ENCODE measurements at regions of chr1 and their contacts with region 1.

Region 1: DNA sequence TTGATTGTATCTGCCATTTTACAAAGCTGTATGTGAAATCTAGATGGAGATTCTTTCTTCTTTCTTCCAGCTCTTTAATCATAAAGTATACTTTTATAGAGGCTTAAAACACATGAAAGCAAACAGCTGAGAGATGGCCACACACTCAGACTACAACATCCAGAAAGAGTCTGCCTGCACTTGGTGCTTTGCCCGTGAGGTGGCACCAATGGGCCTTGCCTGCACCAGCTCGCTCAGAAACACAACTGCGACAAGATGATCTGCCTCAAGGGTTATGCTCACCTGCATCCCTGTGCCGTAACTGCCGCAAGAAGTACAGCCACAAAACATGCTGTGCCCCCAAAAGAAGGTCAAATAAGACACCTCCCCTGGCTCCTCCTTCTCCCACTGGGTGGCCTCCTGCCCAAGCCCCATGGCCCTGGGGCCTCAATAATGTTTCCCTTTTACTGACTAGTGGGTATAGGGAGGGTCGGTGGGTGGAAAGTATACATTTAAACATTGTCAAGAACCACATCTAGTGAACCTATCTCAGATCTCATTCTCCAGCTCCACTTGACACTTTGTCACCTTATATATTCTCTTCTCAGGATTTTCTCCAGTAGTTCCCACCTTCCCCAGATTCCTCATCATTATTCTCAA is 66.7 kb upstream of the ANGPTL3 start:
- DNase-seq: peak; percentile 79
- ATAC-seq: peak; percentile 99
- H3K4me3 Mint-ChIP-seq: no peak overlapping the region
- H3K27ac Mint-ChIP-seq: no peak overlapping the region
- H3K4me1 Mint-ChIP-seq: peaks cover 16% of the 10 kb centered on the region
- H3K27me3 Mint-ChIP-seq: no peaks in the 10 kb centered on the region
- CTCF ChIP-seq: peak; percentile 69

Region 2: DNA sequence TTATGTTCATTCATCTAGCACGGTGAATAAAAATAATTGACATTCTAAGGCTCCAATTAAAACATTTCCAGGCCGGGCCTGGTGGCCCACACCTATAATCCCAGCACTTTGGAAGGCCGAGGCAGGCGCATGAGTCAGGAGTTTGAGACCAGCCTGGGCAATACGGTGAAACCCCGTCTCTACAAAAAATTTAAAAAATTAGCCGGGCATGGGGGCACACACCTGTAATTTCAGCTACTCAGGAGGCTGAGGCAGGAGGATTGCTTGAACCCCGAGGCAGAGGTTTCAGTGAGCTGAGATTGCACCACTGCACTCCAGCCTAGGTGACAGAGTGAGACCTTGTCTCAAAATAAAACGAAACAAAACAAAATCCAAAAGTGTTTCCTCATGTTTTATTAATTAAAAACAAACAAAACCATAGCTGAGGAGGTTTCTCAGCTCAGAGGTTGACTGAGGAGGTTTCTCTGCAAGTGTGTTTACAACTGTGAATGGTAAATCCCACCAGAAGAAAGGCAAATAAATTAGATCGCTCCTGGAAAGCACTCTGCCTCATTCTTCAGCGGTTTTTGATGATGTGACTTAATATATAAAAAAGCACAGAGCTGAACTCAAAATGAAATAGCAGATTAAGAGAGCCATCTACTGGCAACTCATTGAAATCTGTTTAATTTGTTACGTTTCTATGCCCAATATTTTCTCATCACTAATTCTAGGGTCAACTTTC is 215.6 kb after region 1 on chr1:
- CTCF ChIA-PET with region 1: interaction called, 22 read pairs
- POLR2A ChIA-PET with region 1: no interaction called
- DNase-seq: no peak
- ATAC-seq: peak; percentile 28; the same call in 1 of the 2 replicates
- H3K4me3 Mint-ChIP-seq: no peak overlapping the region
- H3K27ac Mint-ChIP-seq: no peak overlapping the region
- H3K4me1 Mint-ChIP-seq: peaks cover 12% of the 10 kb centered on the region
- H3K27me3 Mint-ChIP-seq: no peaks in the 10 kb centered on the region
- CTCF ChIP-seq: no peak

Region 3: DNA sequence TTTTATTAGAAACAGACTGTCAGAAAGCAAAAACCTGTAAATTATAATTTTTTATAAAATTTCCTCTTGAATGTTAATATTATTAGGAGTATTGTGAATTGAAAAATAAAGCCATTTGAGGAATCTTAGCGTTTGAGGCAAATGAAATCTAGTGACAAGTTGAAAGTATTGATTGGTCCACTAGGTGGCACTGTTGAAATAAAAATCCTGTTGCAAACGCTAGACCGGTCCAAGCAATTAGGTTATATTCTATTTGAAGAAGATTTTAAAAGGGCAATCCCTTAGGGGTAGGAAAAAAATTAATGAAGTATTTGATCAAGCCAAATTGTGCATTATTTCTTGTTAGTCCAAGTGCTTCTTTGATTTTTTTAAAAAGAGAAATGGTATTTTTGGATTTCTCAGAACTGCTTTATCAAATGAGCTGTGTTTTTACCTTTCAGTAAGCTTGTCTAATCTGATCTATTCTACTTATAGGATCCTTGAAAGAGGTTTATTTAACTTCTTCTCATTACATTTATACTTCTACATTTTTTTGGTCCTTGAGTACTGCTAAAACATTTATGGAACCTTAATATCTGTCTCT is 311.0 kb after region 1 on chr1:
- CTCF ChIA-PET with region 1: interaction called, 10 read pairs
- POLR2A ChIA-PET with region 1: no interaction called
- DNase-seq: no peak
- ATAC-seq: peak; percentile 41; the same call in 1 of the 2 replicates
- H3K4me3 Mint-ChIP-seq: no peak overlapping the region
- H3K27ac Mint-ChIP-seq: no peak overlapping the region
- H3K4me1 Mint-ChIP-seq: peaks cover 7% of the 10 kb centered on the region
- H3K27me3 Mint-ChIP-seq: no peaks in the 10 kb centered on the region
- CTCF ChIP-seq: peak; percentile 52